ENCODE measurements at regions of chr9 and their contacts with region 1.

Region 1: GRCh38 chr9:135085830-135086546 is 1.5 kb upstream of the OLFM1 start:
- DNase-seq: peak; percentile 82

Region 2: DNA sequence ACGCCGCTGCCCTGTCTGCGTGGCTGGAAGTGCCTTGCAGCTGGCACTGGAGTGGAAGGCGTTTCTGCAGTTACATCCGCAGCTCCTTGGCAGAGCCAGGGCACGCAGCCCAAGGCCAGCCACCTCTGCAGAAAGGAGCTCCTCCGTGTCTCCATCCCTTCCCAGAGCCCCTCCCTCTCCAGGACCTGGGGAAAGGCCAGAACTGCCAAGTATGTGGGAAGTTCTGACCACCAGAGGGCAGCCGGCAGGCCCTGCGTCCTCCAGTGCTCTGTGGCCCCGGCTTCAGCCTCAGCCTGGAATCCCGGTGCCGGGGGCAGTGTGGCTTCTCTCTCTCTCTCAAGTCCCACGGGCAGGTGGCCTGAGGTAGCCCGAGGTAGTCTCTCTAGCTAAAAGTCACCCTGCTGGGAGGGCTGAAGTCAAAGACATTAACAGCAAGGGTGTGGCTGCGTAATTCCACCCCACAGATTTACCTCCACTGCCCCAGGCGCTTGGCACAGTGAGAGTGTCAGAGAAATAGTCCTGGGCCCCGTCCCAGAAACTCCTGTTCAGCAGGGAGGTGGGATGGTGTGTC is 307.1 kb before region 1 on chr9:
- intact Hi-C with region 1: loop called (anchors 10 kb)
- DNase-seq: no peak

Region 3: GRCh38 chr9:135343837-135344522 is 258.0 kb after region 1 on chr9:
- intact Hi-C with region 1: loop called (anchors 1 kb)
- DNase-seq: no peak

Region 4: DNA sequence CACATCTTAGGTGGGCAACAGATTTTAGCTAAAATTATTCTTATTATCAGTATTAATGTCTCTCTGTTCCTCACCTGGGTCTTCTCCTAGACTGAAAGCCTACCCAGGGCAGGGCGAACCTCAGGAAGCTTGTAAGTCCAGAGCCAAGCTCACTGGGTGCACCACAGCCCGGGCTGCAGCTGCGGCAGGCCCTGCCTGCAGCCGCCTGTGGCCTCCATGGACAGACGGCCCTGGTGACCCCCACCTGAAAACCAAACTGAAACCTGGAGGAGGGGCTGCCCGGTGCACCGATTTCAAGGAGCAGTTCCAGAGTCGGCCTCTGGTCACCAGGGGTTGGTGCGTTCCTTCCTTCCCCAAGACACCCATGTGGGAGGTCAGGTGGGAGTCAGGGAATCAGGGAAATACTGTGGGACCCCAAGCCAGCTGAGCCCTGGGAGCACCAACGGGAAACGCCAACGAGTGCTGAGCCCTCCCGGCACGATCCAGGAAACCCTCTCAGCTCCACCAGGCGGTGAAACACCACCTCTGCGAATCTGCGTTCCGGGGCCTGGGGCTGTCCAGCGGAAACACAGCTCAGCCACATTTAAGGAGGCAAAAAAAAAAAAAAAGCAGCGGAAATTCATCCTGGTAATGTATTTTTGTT is 325.0 kb after region 1 on chr9:
- intact Hi-C with region 1: loop called (anchors 1 kb)
- DNase-seq: peak; percentile 53